CD4-positive, alpha-beta memory T cell (primary cell): ENCODE measurements at regions of chr19 and their contacts with region 1.

Region 1: DNA sequence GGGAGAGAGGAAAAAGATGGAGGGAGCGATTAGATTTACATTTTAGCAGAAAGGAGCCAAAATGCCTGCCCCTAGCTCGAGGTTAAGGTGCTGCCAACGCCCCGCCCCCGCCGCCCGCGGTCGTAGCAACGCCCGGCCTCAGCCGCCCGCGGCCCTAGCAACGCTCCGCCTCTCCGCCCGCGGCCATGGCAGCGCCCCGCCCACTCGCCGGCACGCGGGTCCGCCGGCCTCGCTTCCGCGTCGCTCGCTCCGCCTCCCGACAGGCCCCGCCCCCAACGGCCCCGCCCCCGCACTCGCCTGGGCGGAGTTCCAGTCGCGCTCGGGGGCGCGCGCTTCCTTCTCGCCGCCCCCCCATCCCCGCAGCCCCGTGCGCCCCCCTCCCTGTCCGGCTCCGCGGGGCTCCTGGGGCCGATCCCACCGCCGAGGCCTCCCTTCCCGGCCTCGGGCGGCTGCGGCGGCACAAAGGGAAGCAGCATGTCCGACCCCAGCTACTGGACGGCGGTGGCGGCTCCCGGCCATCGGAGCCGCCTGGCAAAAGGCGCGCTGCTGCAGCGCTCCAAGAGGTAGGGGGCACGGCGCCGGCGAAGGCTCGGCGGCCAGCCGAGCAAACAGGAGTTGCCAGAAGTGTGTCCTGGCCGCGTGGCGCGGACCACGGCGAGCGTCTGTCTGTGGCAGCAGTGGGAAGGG is 20.3 kb downstream of the MAST3 start:
- DNase-seq: peak; percentile 92 to 97 (median 96)
- H3K4me3 ChIP-seq: peak overlapping the region; percentile 63 to 64
- H3K4me3 Mint-ChIP-seq: peak overlapping the region; percentile 88 to 98 (median 95)
- H3K27ac ChIP-seq: peak overlapping the region; percentile 85
- H3K27ac Mint-ChIP-seq: peak overlapping the region; percentile 89 to 99 (median 96)
- H3K4me1 ChIP-seq: peaks cover 44% of the 10 kb centered on the region
- H3K4me1 Mint-ChIP-seq: peaks cover 18 to 45% (median 31%) of the 10 kb centered on the region in 4 donors
- H3K27me3 ChIP-seq: no peaks in the 10 kb centered on the region
- H3K27me3 Mint-ChIP-seq: no peaks in the 10 kb centered on the region

Region 2: DNA sequence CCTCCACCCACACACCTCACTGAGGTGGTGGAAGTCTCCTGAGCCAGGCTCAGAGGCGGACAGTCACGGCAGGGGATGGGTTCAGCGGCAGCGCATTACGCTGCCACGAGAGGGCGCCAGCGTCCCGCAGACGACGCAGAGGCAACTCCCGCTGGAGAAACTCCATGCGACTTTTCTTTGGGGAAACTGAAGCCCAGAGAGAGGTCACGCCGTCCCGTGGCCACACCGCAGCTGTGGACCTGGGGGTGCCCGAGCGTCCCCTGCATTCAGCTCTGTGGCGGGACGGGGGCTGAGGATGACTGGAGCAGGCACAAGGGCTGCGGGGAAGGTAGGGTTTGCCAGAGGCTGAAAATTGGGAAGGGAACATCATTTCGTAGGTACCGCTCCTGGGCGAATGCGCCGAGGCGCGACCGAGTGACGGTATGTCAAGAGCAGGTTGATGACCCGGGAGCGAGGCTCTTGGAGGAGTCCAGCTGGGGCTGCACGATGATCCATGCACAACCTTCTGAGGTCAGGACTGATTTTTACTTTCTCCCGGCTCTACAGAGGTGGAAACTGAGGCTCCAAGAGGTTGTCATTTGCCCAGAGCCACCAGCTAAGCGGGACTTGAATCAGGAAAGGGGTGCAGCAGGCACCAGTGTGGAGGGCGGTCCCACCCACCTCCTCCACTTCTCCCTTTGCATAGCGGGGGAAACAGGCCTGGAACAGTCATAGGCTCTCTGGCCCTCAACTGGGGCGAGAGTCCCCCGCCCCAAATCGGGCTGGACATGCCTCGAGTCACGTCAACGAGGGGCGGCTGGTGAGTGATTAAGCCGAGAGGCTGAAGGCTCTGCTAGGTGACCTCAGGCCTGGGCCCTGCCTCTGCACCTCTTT is 110.6 kb before region 1 on chr19:
- CTCF ChIA-PET with region 1: interaction called, 3 read pairs
- POLR2A ChIA-PET with region 1: interaction called, 28 read pairs
- intact Hi-C with region 1: loop called (anchors 2 kb)
- DNase-seq: peak; percentile 75 to 85 (median 79)
- H3K4me3 ChIP-seq: peak overlapping the region; percentile 18 to 68
- H3K4me3 Mint-ChIP-seq: peak overlapping the region; percentile 86 to 95 (median 90)
- H3K27ac ChIP-seq: peak overlapping the region; percentile 95
- H3K27ac Mint-ChIP-seq: peak overlapping the region; percentile 95 to 100 (median 97)
- H3K4me1 ChIP-seq: peaks cover 56% of the 10 kb centered on the region
- H3K4me1 Mint-ChIP-seq: peaks cover 10 to 59% (median 28%) of the 10 kb centered on the region in 4 donors
- H3K27me3 ChIP-seq: no peaks in the 10 kb centered on the region
- H3K27me3 Mint-ChIP-seq: no peaks in the 10 kb centered on the region

Region 3: GRCh38 chr19:18097217-18097992 is 20.4 kb before region 1 on chr19 and contains the start of gene MAST3:
- CTCF ChIA-PET with region 1: interaction called, 36 read pairs
- POLR2A ChIA-PET with region 1: interaction called, 159 read pairs
- intact Hi-C with region 1: loop called (anchors 2 kb)
- DNase-seq: peak; percentile 87 to 93 (median 93)
- H3K4me3 ChIP-seq: peak within 1 kb of the TSS; percentile 38 to 70
- H3K4me3 Mint-ChIP-seq: peak within 1 kb of the TSS; percentile 87 to 95 (median 89)
- H3K27ac ChIP-seq: peak within 1 kb of the TSS; percentile 68
- H3K27ac Mint-ChIP-seq: peak within 1 kb of the TSS; percentile 85 to 93 (median 89)
- H3K4me1 ChIP-seq: peaks cover 36% of the 10 kb centered on the region
- H3K4me1 Mint-ChIP-seq: peaks cover 22 to 50% (median 38%) of the 10 kb centered on the region in 4 donors
- H3K27me3 ChIP-seq: no peaks in the 10 kb centered on the region
- H3K27me3 Mint-ChIP-seq: no peaks in the 10 kb centered on the region
- total RNA-seq, gene MAST3: 51.6 to 53.9 TPM

Region 4: DNA sequence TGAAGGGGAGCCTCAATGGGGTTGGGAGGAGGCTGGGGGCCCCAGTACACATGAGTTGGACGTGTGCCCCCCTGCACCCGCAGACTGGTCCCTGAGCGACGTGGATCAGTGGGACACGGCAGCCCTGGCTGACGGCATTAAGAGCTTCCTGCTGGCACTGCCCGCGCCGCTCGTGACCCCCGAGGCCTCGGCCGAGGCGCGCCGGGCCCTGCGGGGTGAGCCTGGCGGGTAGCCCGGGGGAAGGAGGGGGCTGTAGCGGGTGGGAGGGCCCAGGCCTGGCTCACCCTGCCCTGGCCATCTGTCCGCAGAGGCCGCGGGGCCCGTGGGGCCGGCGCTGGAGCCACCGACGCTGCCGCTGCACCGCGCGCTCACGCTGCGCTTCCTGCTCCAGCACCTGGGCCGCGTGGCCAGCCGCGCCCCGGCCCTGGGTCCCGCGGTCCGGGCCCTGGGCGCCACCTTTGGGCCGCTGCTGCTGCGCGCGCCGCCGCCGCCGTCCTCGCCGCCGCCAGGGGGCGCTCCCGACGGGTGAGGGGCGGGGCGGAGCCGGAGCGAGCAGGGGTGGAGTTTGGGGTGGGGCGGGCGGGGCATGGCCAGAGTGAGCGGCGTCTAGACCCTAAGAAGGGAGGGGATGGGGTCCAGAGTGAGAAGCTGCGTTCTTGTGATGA is 43.3 kb after region 1 on chr19:
- CTCF ChIA-PET with region 1: interaction called, 125 read pairs
- POLR2A ChIA-PET with region 1: interaction called, 13 read pairs
- intact Hi-C with region 1: no loop called
- DNase-seq: peak; percentile 59 to 88 (median 81)
- H3K4me3 ChIP-seq: no peak overlapping the region
- H3K4me3 Mint-ChIP-seq: peak overlapping the region in 5 of 8 donors; percentile 46 to 69 (median 53)
- H3K27ac ChIP-seq: peak overlapping the region; percentile 51
- H3K27ac Mint-ChIP-seq: peak overlapping the region in 4 of 7 donors; percentile 52 to 75 (median 58)
- H3K4me1 ChIP-seq: peaks cover 17% of the 10 kb centered on the region
- H3K4me1 Mint-ChIP-seq: peaks cover 3 to 17% (median 8%) of the 10 kb centered on the region in 4 donors
- H3K27me3 ChIP-seq: no peaks in the 10 kb centered on the region
- H3K27me3 Mint-ChIP-seq: no peaks in the 10 kb centered on the region

Region 5: DNA sequence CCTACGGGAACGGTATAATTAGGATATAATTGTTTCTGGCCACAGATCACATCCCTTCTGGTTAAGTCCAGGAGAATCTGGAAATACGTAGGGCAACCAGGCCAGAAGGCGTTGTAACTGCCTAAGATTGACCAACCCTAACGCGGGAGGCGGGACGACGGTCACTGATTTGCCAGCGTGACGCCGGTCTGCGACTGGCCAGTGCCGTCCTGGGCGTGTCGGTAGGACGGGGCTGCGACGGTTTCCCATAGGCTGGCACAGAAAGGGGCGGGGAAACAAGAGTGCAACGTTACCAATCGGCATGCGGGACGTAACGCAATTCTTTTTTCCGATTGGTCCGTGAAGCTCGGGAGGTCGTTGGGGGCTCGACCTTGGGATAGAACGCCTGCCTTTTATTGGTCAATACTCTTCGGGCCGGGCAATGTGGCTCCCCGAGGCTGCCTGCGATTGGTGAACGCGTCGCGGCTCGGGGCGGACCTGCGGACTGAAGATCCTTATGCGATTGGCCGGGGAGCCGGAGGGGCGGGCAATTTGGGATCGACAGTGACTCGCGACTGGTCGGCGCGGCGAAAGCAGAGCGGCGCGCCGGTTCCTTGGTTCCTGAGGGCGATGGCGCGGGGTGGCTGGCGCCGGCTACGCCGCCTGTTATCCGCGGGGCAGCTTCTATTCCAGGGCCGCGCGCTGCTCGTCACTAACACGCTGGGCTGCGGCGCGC is 75.0 kb after region 1 on chr19 and contains the start of gene MPV17L2:
- CTCF ChIA-PET with region 1: interaction called, 10 read pairs
- POLR2A ChIA-PET with region 1: interaction called, 4 read pairs
- intact Hi-C with region 1: no loop called
- DNase-seq: peak; percentile 98 to 100 (median 99)
- H3K4me3 ChIP-seq: peak within 1 kb of the TSS; percentile 63 to 83
- H3K4me3 Mint-ChIP-seq: peak within 1 kb of the TSS; percentile 87 to 96 (median 92)
- H3K27ac ChIP-seq: peak within 1 kb of the TSS; percentile 73
- H3K27ac Mint-ChIP-seq: peak within 1 kb of the TSS; percentile 89 to 98 (median 96)
- H3K4me1 ChIP-seq: peaks cover 22% of the 10 kb centered on the region
- H3K4me1 Mint-ChIP-seq: peaks cover 11 to 26% (median 20%) of the 10 kb centered on the region in 4 donors
- H3K27me3 ChIP-seq: no peaks in the 10 kb centered on the region
- H3K27me3 Mint-ChIP-seq: no peaks in the 10 kb centered on the region
- total RNA-seq, gene MPV17L2: 7.6 to 7.8 TPM